ENCODE measurements at regions of chr4 and their contacts with region 1.

Region 1: DNA sequence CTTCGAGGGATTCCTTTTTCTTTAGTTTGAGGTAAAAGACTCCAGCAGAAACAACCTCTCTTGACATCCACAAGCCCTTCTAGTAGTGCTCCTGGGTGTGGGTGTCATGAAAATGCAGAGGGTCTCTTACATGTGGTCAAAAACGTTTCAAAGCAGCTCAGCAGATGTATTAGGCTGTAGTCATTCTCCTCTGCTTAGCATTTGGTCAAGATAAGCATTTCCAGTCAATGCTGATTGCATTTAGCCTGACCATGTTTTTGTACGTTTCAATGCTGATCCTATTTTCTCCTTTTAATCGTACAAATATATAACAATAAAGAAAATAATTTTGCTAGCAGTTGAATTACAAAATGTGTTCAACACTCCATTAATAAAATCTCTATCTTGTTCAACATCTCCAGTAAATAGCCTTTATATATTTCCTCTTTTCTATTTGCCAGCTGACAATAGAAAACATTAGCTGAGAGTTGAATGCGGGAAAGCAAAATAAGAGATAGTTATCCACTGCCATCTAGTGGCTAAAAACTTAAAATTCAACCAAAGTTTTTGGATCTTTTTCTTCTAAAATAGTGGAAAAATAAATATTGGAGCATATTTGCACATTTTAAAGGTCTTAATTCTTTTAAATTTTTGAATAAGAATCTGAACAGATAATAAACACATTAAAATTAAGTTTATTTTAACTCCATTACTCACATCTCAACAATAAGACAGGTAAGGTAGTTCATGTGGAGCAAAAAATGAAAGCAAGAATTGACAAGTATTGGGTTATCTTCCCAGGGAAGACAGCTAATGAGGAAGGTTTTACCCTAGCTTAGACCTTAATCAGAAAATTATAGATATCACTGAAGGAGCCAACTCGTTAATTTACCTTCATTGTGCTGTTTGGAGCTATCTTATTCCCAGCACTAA is 15.2 kb upstream of the PACRGL start:
- DNase-seq: no peak
- H3K4me3 ChIP-seq: no peak overlapping the region
- CTCF ChIP-seq: peak; percentile 22

Region 2: DNA sequence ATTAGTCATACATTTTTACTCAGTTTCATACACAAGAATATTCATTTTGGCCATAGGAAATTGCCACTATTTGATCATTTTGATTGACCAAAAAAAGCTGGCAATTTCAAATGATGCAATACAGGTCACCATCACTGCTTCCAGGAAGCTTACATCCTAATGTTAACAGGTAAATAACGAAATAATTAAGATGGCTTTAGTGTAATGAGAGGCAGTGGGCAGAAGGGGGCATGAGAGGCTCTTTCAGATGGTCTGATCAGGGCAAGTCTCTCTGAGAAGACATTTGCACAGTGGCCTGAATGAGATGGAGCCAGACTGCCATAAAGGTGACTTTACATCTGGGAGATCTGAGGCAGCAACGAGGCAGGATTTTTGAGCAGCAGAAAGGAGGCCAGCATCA is 262.7 kb before region 1 on chr4:
- CTCF ChIA-PET with region 1: interaction called, 21 read pairs
- POLR2A ChIA-PET with region 1: no interaction called
- DNase-seq: no peak
- H3K4me3 ChIP-seq: no peak overlapping the region
- CTCF ChIP-seq: peak; percentile 54

Region 3: GRCh38 chr4:20700007-20700761 is 15.1 kb after region 1 on chr4 and contains the start of gene PACRGL:
- CTCF ChIA-PET with region 1: interaction called, 11 read pairs
- POLR2A ChIA-PET with region 1: interaction called, 3 read pairs
- DNase-seq: peak; percentile 51
- H3K4me3 ChIP-seq: peak within 1 kb of the TSS; percentile 83
- CTCF ChIP-seq: no peak

Region 4: GRCh38 chr4:21041708-21042107 is 356.6 kb after region 1 on chr4:
- CTCF ChIA-PET with region 1: no interaction called
- POLR2A ChIA-PET with region 1: no interaction called
- DNase-seq: no peak
- H3K4me3 ChIP-seq: no peak overlapping the region
- CTCF ChIP-seq: no peak

Region 5: GRCh38 chr4:21090094-21090666 is 405.1 kb after region 1 on chr4:
- CTCF ChIA-PET with region 1: no interaction called
- POLR2A ChIA-PET with region 1: no interaction called
- DNase-seq: no peak
- H3K4me3 ChIP-seq: no peak overlapping the region
- CTCF ChIP-seq: no peak